H1 (cell line): ENCODE measurements at regions of chr1 and their contacts with region 1.

Region 1: GRCh38 chr1:161201828-161202725 is at the start of gene NDUFS2:
- DNase-seq: peak; percentile 89 to 95
- H3K4me3 ChIP-seq: peak within 1 kb of the TSS; percentile 63 to 97 (median 93)
- H3K27ac ChIP-seq: peak within 1 kb of the TSS; percentile 94
- H3K4me1 ChIP-seq: peaks cover 20 to 48% (median 42%) of the 10 kb centered on the region in 4 experiments
- H3K27me3 ChIP-seq: no peaks in the 10 kb centered on the region
- CTCF ChIP-seq: peak; percentile 31 to 62 (median 49)
- EP300 ChIP-seq: no peak
- POLR2A ChIP-seq: peak; percentile 97 to 99
- RAD21 ChIP-seq: peak in 1 of 2 experiments; percentile 23; a peak in 1 of 4 replicates
- total RNA-seq, gene NDUFS2: 88.7 and 95.1 TPM in 2 replicates

Region 2: DNA sequence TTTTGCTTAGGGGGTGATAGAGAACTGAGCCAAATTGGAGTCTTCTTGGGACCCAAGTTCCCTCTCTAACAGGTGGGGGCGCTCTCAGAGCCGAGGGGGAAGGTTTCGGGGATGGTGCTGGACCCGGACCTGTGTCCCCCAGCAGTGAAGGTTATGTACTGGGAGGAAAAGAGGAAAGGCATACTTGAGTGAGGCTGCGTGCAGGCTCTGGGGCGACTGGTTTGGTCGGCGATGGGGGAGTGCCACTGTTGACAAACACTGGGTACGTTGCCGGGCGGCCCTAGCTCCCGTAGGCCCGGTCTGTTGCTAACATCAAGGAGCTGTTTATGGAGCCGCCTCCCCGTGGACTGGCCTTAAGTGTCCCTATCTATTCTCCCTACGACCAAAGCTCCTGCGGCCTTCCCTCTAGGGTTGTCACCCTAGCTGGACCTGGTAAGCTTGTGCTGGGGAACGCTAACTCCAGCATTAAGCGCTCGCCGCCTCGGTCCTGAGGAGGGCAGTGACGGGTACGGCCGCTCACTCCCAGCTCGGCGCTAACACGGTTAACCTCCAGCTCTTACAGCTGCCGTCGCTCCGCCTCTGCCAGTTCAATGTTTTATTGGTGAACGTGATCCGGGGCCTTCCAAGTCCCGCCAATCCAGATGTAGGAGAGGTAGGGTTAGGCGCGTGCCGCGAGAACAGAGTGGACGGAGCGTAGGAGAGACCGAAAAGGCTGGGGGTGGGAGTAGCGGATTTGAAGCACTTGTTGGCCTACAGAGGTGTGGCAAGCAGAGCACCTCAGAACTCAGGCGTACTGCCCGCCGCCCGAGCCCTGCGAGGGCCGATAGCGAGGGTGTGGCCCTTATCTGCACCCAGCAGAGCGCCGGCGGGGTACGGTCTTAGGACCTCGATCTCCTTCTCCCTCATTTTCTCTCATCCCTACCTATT is 36.1 kb before region 1 on chr1 and contains the start of gene PPOX:
- CTCF ChIA-PET with region 1: interaction called, 22 read pairs
- POLR2A ChIA-PET with region 1: interaction called, 12 read pairs
- DNase-seq: peak; percentile 90 to 94
- H3K4me3 ChIP-seq: peak within 1 kb of the TSS; percentile 64 to 87 (median 82)
- H3K27ac ChIP-seq: peak within 1 kb of the TSS; percentile 47
- H3K4me1 ChIP-seq: peaks cover 0 to 7% (median 5%) of the 10 kb centered on the region in 4 experiments; a peak in 4 of 7 replicates
- H3K27me3 ChIP-seq: no peaks in the 10 kb centered on the region
- CTCF ChIP-seq: peak; percentile 45 to 55 (median 50)
- EP300 ChIP-seq: 0 out of 3 replicates have a peak, but pooled peaks of 1 of the 2 experiments have one; percentile 14
- POLR2A ChIP-seq: peak; percentile 56 to 84
- RAD21 ChIP-seq: no peak
- total RNA-seq, gene PPOX: 32.1 and 40.4 TPM in 2 replicates

Region 3: GRCh38 chr1:161177112-161177935 is 24.8 kb before region 1 on chr1 and contains the start of gene B4GALT3:
- CTCF ChIA-PET with region 1: interaction called, 9 read pairs
- POLR2A ChIA-PET with region 1: interaction called, 13 read pairs
- DNase-seq: peak in 1 of 2 experiments; percentile 100
- H3K4me3 ChIP-seq: peak within 1 kb of the TSS; percentile 66 to 96 (median 84)
- H3K27ac ChIP-seq: peak within 1 kb of the TSS; percentile 88
- H3K4me1 ChIP-seq: peaks cover 0 to 13% (median under 1%) of the 10 kb centered on the region in 4 experiments; a peak in 3 of 7 replicates
- H3K27me3 ChIP-seq: no peaks in the 10 kb centered on the region
- CTCF ChIP-seq: peak; percentile 32 to 40 (median 38); a peak in 3 of 4 replicates
- EP300 ChIP-seq: no peak
- POLR2A ChIP-seq: peak; percentile 89 to 97
- RAD21 ChIP-seq: peak in 1 of 2 experiments; percentile 23; a peak in 2 of 4 replicates
- total RNA-seq, gene B4GALT3: 42.3 and 45.5 TPM in 2 replicates

Region 4: GRCh38 chr1:161216945-161217712 is 15.1 kb after region 1 on chr1:
- CTCF ChIA-PET with region 1: interaction called, 427 read pairs
- POLR2A ChIA-PET with region 1: interaction called, 82 read pairs
- DNase-seq: no peak
- H3K4me3 ChIP-seq: no peak overlapping the region
- H3K27ac ChIP-seq: no peak overlapping the region
- H3K4me1 ChIP-seq: peaks cover 0 to 13% (median 0%) of the 10 kb centered on the region in 4 experiments; a peak in 3 of 7 replicates
- H3K27me3 ChIP-seq: 0 out of 7 replicates have a peak, but pooled peaks cover 0 to under 1% (median 0%) of the 10 kb centered on the region in 4 experiments
- CTCF ChIP-seq: no peak
- EP300 ChIP-seq: no peak
- POLR2A ChIP-seq: no peak
- RAD21 ChIP-seq: no peak

Region 5: GRCh38 chr1:161305867-161306519 is 103.9 kb after region 1 on chr1:
- CTCF ChIA-PET with region 1: interaction called, 10 read pairs
- POLR2A ChIA-PET with region 1: interaction called, 12 read pairs
- DNase-seq: peak; percentile 96 to 97
- H3K4me3 ChIP-seq: peak overlapping the region; percentile 70 to 87 (median 79)
- H3K27ac ChIP-seq: no peak overlapping the region
- H3K4me1 ChIP-seq: peaks cover 0 to 16% (median 9%) of the 10 kb centered on the region in 4 experiments; a peak in 6 of 7 replicates
- H3K27me3 ChIP-seq: no peaks in the 10 kb centered on the region
- CTCF ChIP-seq: peak; percentile 84 to 90 (median 89)
- EP300 ChIP-seq: peak in 1 of 2 experiments; percentile 35; a peak in 1 of 3 replicates
- POLR2A ChIP-seq: peak in 1 of 2 experiments; percentile 55; a peak in 1 of 3 replicates
- RAD21 ChIP-seq: peak; percentile 82 to 85

Region 6: DNA sequence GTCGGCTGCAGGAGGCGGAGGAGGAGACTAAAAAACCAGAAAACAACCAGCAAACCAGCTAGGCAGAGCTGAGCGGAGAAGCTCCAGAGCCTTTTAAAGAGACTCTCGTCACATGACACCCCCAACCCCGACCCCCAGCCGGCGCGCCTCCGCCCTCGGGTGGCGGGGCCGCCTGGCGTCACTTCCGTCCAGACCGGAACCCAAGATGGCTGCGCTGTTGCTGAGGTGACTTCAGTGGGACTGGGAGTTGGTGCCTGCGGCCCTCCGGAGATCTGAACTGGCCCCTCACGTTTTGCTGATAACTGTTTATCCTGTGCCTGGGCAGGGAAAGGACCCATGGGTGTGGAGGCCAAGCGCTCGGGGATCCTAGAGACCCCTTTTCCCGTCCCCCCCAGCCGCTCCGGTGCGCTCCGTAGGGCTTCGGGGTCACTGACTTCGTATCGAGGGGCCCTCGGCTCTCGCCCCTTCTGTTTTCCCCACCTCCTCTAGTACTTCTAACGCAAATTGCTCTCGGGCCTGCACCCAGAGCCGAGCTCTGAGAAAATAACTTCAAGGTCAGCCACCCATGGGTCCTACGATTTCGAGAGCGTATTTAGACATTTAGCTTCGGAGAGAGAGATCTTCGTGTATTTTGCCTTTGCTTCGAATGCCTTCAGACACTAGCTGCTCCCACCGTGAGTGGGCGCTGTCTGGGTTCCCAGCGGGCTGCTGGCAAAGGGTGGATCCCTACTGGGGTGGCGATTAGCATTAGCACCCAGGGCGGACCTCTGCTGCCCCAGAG is 112.3 kb after region 1 on chr1 and contains the start of gene SDHC:
- CTCF ChIA-PET with region 1: no interaction called
- POLR2A ChIA-PET with region 1: interaction called, 16 read pairs
- DNase-seq: peak; percentile 68 to 92
- H3K4me3 ChIP-seq: peak within 1 kb of the TSS; percentile 74 to 98 (median 94)
- H3K27ac ChIP-seq: peak within 1 kb of the TSS; percentile 96
- H3K4me1 ChIP-seq: peaks cover 0 to 8% (median 6%) of the 10 kb centered on the region in 4 experiments; a peak in 6 of 7 replicates
- H3K27me3 ChIP-seq: no peaks in the 10 kb centered on the region; a peak in 1 of 7 replicates
- CTCF ChIP-seq: peak; percentile 26 to 53 (median 38)
- EP300 ChIP-seq: peak in 1 of 2 experiments; percentile 56; a peak in 1 of 3 replicates
- POLR2A ChIP-seq: peak; percentile 91 to 99
- RAD21 ChIP-seq: peak in 1 of 2 experiments; percentile 4; a peak in 1 of 4 replicates
- total RNA-seq, gene SDHC: 216 and 224 TPM in 2 replicates